ENCODE measurements at regions of chr7 and their contacts with region 1.

Region 1: DNA sequence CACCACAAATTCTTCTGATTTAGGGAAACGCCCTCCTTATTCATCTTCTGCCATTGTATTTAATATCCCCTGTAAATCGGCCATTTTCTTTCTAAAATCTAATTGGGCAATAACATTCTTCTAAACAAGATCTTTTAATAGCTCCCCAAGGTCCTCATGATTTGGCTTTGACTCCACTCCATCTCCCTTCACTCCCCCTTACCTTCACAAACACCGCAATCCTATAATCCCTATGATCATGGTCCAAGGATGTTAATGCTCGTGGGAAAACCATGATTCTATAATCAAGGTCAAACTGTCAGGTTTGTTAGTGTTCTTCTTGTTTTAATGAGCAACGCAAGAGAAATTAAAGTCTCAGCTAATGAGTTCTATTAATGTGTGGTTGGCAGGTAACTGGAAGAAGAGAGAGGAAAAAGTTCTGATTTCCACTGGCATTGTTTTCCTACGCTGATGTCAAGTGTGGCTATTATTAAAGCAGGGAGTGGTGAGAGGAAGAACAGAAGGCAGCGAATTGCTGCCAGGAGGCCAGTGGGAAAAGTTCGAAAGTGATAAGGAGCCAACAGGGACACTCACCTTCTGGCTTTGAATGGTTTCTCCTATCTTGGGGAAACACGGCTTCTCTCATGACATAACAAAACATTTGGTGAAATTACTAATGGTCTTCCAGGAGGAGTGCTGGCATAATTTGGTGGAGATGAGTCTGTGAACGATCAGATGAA is 28.1 kb downstream of the LRRC72 start:
- DNase-seq: no peak
- H3K4me3 ChIP-seq: no peak overlapping the region
- H3K27ac ChIP-seq: no peak overlapping the region
- H3K4me1 ChIP-seq: no peaks in the 10 kb centered on the region
- H3K27me3 ChIP-seq: no peaks in the 10 kb centered on the region
- CTCF ChIP-seq: no peak
- POLR2A ChIP-seq: no peak

Region 2: DNA sequence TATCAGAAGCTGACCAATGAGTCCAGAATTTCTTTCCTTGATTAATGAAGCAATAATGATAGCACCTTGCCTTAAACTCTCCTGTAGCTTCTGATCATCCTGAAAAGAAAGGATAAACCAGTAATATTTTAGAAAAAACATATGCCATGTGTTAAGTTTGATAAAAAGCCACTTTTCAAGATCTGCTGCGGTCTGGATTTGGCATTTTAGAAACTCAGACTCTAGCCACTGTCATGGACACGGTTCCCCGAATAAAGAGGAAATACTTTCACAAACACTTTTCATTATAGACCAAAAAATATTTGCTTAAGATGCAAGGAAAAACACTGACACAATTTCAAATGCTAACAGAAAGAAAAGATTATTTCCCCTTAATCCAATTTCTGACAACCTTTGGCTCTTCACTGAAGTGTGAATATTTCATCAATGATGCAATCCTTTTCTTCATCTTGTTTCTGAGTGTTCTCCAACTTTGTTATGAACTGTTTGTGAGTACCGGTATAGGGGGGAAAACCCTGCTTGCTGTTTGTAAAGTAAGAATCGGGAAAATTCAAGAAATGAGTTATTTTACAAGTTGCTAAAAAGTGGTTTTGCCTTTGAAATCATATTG is 462.9 kb before region 1 on chr7:
- intact Hi-C with region 1: loop called (anchors 5 kb)
- DNase-seq: no peak
- H3K4me3 ChIP-seq: no peak overlapping the region
- H3K27ac ChIP-seq: no peak overlapping the region
- H3K4me1 ChIP-seq: no peaks in the 10 kb centered on the region
- H3K27me3 ChIP-seq: no peaks in the 10 kb centered on the region
- CTCF ChIP-seq: no peak
- POLR2A ChIP-seq: no peak

Measured in prostate gland (tissue), 2 donors.